Psoas muscle (tissue), 8 donors: ENCODE measurements at regions of chr3 and their contacts with region 1.

Region 1: DNA sequence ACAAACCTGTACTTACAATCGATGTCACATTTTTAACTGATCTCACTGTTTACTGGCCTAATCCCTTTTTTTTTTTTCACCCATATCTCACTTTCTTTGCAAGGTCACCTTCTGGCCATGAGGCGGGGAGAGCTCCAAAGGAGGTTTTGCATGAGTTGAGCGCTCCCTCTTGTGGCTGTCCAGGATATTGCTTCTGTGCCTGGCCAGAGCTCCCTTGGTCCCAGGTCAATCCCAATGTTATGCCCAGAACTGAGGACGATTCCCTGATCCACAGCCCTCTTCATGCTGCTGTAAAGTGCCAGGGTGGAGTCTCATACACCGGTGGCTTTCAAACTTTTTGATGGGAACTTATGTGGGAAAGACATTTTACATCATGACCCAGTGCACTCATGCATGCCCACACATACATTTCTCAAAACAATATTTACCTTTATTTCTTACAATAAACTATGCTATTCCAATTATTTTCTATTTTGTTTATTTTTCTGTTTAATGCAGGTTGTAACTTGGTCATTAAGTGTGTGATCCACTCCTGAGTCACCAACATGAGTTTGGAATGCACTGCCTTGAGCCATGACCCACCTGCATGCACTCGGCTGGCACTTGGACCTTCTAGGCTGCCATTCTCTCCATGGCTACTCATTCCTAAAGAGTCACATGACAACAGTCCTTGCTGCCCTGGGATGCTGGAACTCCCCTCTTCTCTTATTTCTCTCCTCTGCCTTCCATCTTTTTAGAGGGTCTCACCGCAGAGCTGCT is 9.6 kb upstream of the SST start:
- DNase-seq: peak; percentile 70 to 82
- ATAC-seq: peak; percentile 86 to 98 (median 90)
- H3K4me3 ChIP-seq: no peak overlapping the region
- H3K27ac ChIP-seq: no peak overlapping the region
- H3K4me1 ChIP-seq: no peaks in the 10 kb centered on the region
- H3K27me3 ChIP-seq: peaks cover 0 to 4% (median 2%) of the 10 kb centered on the region in 3 donors
- CTCF ChIP-seq: peak; percentile 95

Region 2: DNA sequence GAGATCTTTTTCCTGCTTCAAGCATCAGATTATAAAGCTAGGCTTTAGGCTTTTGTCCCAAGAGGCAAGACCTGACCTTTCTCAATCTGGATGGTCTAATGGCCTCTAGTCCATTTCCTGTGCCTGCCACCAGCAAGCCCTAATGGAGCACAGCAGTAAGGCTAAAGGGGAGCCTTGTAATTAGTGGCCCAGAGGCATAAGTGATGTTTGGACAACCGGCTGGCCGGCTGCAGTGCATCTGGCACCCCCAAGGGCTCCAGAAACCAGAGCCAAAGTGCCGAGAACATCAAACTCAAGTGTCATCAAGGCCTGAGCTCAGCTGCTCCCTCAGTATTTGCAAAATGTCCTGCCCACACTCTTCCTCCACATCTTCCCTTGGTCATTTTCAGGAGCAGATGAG is 343.5 kb before region 1 on chr3:
- intact Hi-C with region 1: no loop called
- DNase-seq: no peak
- ATAC-seq: no peak
- H3K4me3 ChIP-seq: no peak overlapping the region
- H3K27ac ChIP-seq: no peak overlapping the region
- H3K4me1 ChIP-seq: no peaks in the 10 kb centered on the region
- H3K27me3 ChIP-seq: no peaks in the 10 kb centered on the region
- CTCF ChIP-seq: no peak

Region 3: GRCh38 chr3:187616307-187616972 is 63.4 kb before region 1 on chr3:
- intact Hi-C with region 1: loop called in 1 of 2 experiments (anchors 5 kb)
- DNase-seq: peak in 1 of 2 donors; percentile 51
- ATAC-seq: peak; percentile 44 to 82 (median 59)
- H3K4me3 ChIP-seq: no peak overlapping the region
- H3K27ac ChIP-seq: no peak overlapping the region
- H3K4me1 ChIP-seq: peaks cover 4% of the 10 kb centered on the region
- H3K27me3 ChIP-seq: no peaks in the 10 kb centered on the region
- CTCF ChIP-seq: peak; percentile 75

Region 4: DNA sequence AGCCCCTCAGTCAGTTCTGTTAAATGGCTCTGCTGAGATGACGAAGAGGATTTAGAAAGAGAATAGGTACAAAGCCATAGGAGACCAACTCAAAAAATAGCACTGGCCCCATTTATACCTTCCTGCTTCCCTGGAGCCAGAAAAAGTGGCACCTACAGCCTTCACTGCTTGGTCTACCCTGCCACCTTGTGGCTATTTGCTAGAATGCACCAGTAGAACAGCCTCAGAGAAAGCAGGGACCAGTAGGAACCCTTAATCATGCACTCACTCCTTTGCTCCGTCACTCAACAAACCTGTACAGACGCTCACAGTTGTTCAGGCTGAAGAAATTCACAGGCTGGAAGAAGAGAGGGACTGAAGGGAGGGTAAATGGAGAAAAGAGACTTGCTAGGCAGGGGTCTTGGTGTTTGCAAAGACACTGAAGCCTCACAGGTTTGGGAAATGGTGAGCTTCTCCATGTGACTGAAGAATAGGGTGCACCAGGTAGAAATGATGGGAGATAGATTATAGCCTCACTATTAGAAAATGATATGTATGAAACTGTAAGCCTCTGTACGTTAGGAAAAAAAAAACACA is 34.7 kb after region 1 on chr3:
- intact Hi-C with region 1: loop called in 1 of 2 experiments (anchors 2 kb)
- DNase-seq: no peak
- ATAC-seq: peak; percentile 79 to 86 (median 80)
- H3K4me3 ChIP-seq: no peak overlapping the region
- H3K27ac ChIP-seq: no peak overlapping the region
- H3K4me1 ChIP-seq: peaks cover 17% of the 10 kb centered on the region
- H3K27me3 ChIP-seq: no peaks in the 10 kb centered on the region
- CTCF ChIP-seq: peak; percentile 98